Caco-2 (cell line): ENCODE measurements at regions of chr5 and their contacts with region 1.

Region 1: GRCh38 chr5:111550279-111551020 is 38.1 kb upstream of the STARD4 start:
- DNase-seq: peak; percentile 69 to 84
- H3K4me3 ChIP-seq: no peak overlapping the region
- H3K4me3 Mint-ChIP-seq: no peak overlapping the region
- H3K27ac Mint-ChIP-seq: no peak overlapping the region
- H3K4me1 ChIP-seq: no peaks in the 10 kb centered on the region
- H3K4me1 Mint-ChIP-seq: no peaks in the 10 kb centered on the region
- H3K27me3 ChIP-seq: no peaks in the 10 kb centered on the region
- H3K27me3 Mint-ChIP-seq: peaks cover 2% of the 10 kb centered on the region
- CTCF ChIP-seq: peak; percentile 44 to 70

Region 2: DNA sequence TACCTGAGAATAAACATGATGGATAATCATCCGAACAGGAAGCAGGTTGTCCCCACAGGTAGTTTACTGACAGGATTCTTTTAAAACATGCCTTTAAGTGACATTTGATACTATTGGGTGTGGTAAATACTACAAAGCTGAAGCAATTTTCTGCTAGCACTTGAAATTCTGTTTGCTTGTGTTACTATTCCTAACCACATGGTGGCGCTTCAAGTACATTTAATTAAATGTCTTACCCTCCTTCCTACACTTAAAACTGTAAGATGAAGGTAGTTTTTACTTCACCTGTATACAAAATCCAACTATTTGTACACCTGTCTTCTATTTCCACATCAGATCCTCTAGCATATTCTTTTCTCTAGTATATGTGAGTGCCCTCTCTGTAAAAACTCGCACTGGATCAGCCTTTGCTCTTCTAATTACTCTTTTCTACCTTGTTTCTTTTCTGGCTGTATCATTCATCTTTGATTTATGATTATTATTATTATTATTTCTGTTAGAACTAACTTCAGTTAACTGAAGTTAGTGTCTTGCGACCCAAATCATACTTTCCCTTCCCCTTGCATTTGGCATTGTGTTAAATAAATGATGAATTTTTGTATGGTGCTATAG is 793.2 kb before region 1 on chr5:
- CTCF ChIA-PET with region 1: no interaction called
- POLR2A ChIA-PET with region 1: no interaction called
- intact Hi-C with region 1: loop called (anchors 5 kb)
- DNase-seq: peak in 1 of 2 experiments; percentile 46
- H3K4me3 ChIP-seq: no peak overlapping the region
- H3K4me3 Mint-ChIP-seq: no peak overlapping the region
- H3K27ac Mint-ChIP-seq: no peak overlapping the region
- H3K4me1 ChIP-seq: no peaks in the 10 kb centered on the region
- H3K4me1 Mint-ChIP-seq: no peaks in the 10 kb centered on the region
- H3K27me3 ChIP-seq: no peaks in the 10 kb centered on the region
- H3K27me3 Mint-ChIP-seq: no peaks in the 10 kb centered on the region
- CTCF ChIP-seq: peak; percentile 52 to 59

Region 3: GRCh38 chr5:111254613-111255012 is 295.8 kb before region 1 on chr5:
- CTCF ChIA-PET with region 1: no interaction called
- POLR2A ChIA-PET with region 1: no interaction called
- intact Hi-C with region 1: no loop called
- DNase-seq: no peak
- H3K4me3 ChIP-seq: no peak overlapping the region
- H3K4me3 Mint-ChIP-seq: no peak overlapping the region
- H3K27ac Mint-ChIP-seq: no peak overlapping the region
- H3K4me1 ChIP-seq: no peaks in the 10 kb centered on the region
- H3K4me1 Mint-ChIP-seq: no peaks in the 10 kb centered on the region
- H3K27me3 ChIP-seq: no peaks in the 10 kb centered on the region
- H3K27me3 Mint-ChIP-seq: peaks cover 10% of the 10 kb centered on the region
- CTCF ChIP-seq: no peak

Region 4: GRCh38 chr5:111502956-111503355 is 47.5 kb before region 1 on chr5:
- CTCF ChIA-PET with region 1: no interaction called
- POLR2A ChIA-PET with region 1: no interaction called
- intact Hi-C with region 1: no loop called
- DNase-seq: no peak
- H3K4me3 ChIP-seq: no peak overlapping the region
- H3K4me3 Mint-ChIP-seq: no peak overlapping the region
- H3K27ac Mint-ChIP-seq: no peak overlapping the region
- H3K4me1 ChIP-seq: 0 out of 2 replicates have a peak, but pooled peaks cover 5% of the 10 kb centered on the region
- H3K4me1 Mint-ChIP-seq: peaks cover 19% of the 10 kb centered on the region
- H3K27me3 ChIP-seq: no peaks in the 10 kb centered on the region
- H3K27me3 Mint-ChIP-seq: no peaks in the 10 kb centered on the region
- CTCF ChIP-seq: no peak

Region 5: DNA sequence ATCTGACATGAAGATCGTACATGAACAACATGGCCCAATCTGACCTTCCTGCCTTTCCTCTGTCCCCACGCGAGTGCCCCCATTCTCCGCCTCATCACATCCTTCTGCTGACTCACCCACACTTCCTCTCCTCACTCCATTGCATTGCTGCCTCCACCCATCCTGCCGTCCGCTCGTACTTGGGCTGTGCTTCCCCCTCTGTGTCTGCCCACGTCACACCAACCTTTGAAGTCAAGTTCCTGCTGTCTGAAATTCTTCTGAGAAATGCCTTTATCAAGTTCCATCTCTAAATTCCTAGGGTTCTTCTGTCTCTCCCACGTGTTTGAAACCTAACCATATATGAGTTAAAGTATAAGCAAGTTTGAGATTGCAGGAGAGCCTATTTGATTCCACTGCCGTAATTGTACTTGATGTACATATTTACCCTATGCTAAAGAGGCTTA is 20.1 kb before region 1 on chr5:
- CTCF ChIA-PET with region 1: interaction called, 6 read pairs
- POLR2A ChIA-PET with region 1: no interaction called
- intact Hi-C with region 1: loop called (anchors 1 kb)
- DNase-seq: peak; percentile 89 to 94
- H3K4me3 ChIP-seq: peak overlapping the region; percentile 26
- H3K4me3 Mint-ChIP-seq: peak overlapping the region; percentile 71
- H3K27ac Mint-ChIP-seq: peak overlapping the region; percentile 91
- H3K4me1 ChIP-seq: peaks cover 9% of the 10 kb centered on the region
- H3K4me1 Mint-ChIP-seq: peaks cover 12% of the 10 kb centered on the region
- H3K27me3 ChIP-seq: no peaks in the 10 kb centered on the region
- H3K27me3 Mint-ChIP-seq: no peaks in the 10 kb centered on the region
- CTCF ChIP-seq: no peak

Region 6: GRCh38 chr5:111697881-111698757 is 147.7 kb after region 1 on chr5:
- CTCF ChIA-PET with region 1: no interaction called
- POLR2A ChIA-PET with region 1: no interaction called
- intact Hi-C with region 1: loop called (anchors 1 kb)
- DNase-seq: peak in 1 of 2 experiments; percentile 37
- H3K4me3 ChIP-seq: no peak overlapping the region
- H3K4me3 Mint-ChIP-seq: no peak overlapping the region
- H3K27ac Mint-ChIP-seq: no peak overlapping the region
- H3K4me1 ChIP-seq: no peaks in the 10 kb centered on the region
- H3K4me1 Mint-ChIP-seq: no peaks in the 10 kb centered on the region
- H3K27me3 ChIP-seq: no peaks in the 10 kb centered on the region
- H3K27me3 Mint-ChIP-seq: peaks cover 6% of the 10 kb centered on the region
- CTCF ChIP-seq: peak; percentile 18 to 36

Region 7: DNA sequence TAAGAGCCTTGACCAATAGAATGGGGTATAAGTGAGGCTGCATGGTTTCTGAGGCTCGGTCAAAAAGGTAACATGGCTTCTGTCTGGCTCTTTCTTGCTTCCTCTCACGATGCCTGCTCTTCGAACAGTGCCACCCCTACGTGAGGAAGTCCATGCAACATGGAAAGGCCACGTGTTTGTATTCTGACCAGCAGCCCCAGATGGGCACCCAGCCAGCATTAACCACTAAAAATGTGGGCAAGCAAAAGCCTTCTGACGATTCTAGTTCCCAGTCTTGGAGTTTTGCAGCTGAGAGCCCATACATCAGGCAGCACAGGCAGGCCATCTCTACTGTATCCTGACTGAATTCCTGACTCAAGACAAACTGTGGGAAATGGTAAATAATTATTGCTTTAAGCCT is 230.8 kb after region 1 on chr5:
- CTCF ChIA-PET with region 1: no interaction called
- POLR2A ChIA-PET with region 1: no interaction called
- intact Hi-C with region 1: no loop called
- DNase-seq: no peak
- H3K4me3 ChIP-seq: no peak overlapping the region
- H3K4me3 Mint-ChIP-seq: no peak overlapping the region
- H3K27ac Mint-ChIP-seq: no peak overlapping the region
- H3K4me1 ChIP-seq: no peaks in the 10 kb centered on the region
- H3K4me1 Mint-ChIP-seq: peaks cover 5% of the 10 kb centered on the region
- H3K27me3 ChIP-seq: no peaks in the 10 kb centered on the region; the same call in 1 of the 2 replicates
- H3K27me3 Mint-ChIP-seq: peaks cover 20% of the 10 kb centered on the region
- CTCF ChIP-seq: no peak

Region 8: DNA sequence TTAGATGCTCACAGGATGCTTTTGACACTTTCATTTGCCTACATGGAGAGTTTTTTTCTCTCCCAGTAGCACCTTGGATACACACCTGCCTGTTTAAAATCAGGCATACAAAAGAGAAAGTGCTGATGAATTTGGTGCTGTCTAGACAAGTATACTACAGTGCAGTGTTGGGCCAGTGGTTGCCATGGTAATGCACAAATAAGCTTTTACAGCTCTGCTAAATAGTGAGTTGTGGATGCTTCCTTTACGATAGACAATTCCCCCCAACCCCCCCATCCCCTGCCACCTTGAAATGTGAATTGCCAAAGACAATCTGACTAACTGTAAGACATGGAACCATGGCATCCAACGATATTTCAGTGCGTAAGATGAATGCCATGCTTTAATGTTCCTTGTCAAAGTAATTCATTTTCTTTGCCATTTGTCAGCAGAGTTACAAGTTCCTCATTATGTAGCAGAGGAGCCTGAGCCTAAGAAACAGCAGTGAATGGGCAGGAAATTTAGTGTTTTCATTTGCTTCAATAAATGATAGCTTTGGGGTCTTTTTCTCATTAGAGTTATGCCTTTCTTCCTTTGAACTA is 298.0 kb after region 1 on chr5:
- CTCF ChIA-PET with region 1: no interaction called
- POLR2A ChIA-PET with region 1: no interaction called
- intact Hi-C with region 1: loop called (anchors 10 kb)
- DNase-seq: no peak
- H3K4me3 ChIP-seq: no peak overlapping the region
- H3K4me3 Mint-ChIP-seq: no peak overlapping the region
- H3K27ac Mint-ChIP-seq: no peak overlapping the region
- H3K4me1 ChIP-seq: no peaks in the 10 kb centered on the region
- H3K4me1 Mint-ChIP-seq: no peaks in the 10 kb centered on the region
- H3K27me3 ChIP-seq: no peaks in the 10 kb centered on the region
- H3K27me3 Mint-ChIP-seq: peaks cover 10% of the 10 kb centered on the region
- CTCF ChIP-seq: no peak